Activated CD4-positive, alpha-beta T cell treated with anti-CD3 and anti-CD28 coated beads, Interleukin-2, amount 10 ng/mL, durations not matched to agents 24 days and 14 days (primary cell): ENCODE measurements at regions of chr20 and their contacts with region 1.

Region 1: GRCh38 chr20:63627129-63627750 is 339 bp upstream of the GMEB2 start:
- DNase-seq: peak; percentile 98
- H3K4me3 Mint-ChIP-seq: peak overlapping the region; percentile 97
- H3K27ac Mint-ChIP-seq: peak overlapping the region; percentile 99
- H3K4me1 Mint-ChIP-seq: peaks cover 20% of the 10 kb centered on the region
- H3K27me3 Mint-ChIP-seq: no peaks in the 10 kb centered on the region

Region 2: DNA sequence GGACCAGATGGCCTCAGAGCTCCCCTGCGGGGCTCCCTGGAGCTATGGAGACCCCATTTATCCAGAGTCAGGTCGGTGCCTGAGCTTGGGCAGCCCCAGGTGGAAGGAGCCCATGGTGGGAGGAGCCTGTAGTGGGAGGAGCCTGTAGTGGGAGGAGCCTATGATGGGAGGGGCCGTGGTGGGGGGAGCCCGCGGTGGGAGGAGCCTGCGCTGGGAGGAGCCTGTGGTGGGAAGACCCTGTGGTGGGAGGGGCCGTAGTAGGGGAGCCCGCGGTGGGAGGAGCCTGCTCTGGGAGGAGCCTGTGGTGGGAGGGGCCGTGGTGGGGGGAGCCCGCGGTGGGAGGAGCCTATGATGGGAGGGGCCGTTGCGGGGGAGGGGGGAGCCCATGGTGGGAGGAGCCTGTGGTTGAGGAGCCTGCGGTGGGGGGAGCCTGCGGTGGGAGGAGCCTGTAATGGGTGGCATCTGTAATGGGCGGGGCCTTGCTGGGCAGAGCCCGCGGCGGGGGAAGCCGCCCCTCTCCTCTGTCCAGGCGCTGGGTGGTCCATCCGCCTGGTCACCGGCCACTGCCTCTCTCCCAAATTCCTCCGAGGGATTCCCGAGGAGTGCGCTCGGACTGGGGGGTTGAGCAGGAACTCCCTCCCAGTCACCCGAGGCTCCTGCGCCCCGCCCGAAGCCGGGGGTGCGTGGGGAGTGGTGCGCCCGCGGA is 73.9 kb before region 1 on chr20:
- intact Hi-C with region 1: loop called (anchors 1 kb)
- DNase-seq: peak; percentile 97
- H3K4me3 Mint-ChIP-seq: peak overlapping the region; percentile 77
- H3K27ac Mint-ChIP-seq: peak overlapping the region; percentile 76
- H3K4me1 Mint-ChIP-seq: peaks cover 12% of the 10 kb centered on the region
- H3K27me3 Mint-ChIP-seq: peaks cover 15% of the 10 kb centered on the region

Region 3: GRCh38 chr20:63574156-63574828 is 52.9 kb before region 1 on chr20 and contains the start of gene HELZ2:
- intact Hi-C with region 1: loop called (anchors 5 kb)
- DNase-seq: peak; percentile 91
- H3K4me3 Mint-ChIP-seq: peak within 1 kb of the TSS; percentile 86
- H3K27ac Mint-ChIP-seq: peak within 1 kb of the TSS; percentile 80
- H3K4me1 Mint-ChIP-seq: peaks cover 4% of the 10 kb centered on the region
- H3K27me3 Mint-ChIP-seq: peaks cover 10% of the 10 kb centered on the region
- total RNA-seq, gene HELZ2: 13.7 and 15.9 TPM in 2 replicates

Region 4: GRCh38 chr20:63657937-63658748 is 30.9 kb after region 1 on chr20 and contains the start of gene RTEL1:
- intact Hi-C with region 1: loop called (anchors 1 kb)
- DNase-seq: peak; percentile 98
- H3K4me3 Mint-ChIP-seq: peak within 1 kb of the TSS; percentile 93
- H3K27ac Mint-ChIP-seq: peak within 1 kb of the TSS; percentile 89
- H3K4me1 Mint-ChIP-seq: peaks cover 34% of the 10 kb centered on the region
- H3K27me3 Mint-ChIP-seq: peaks cover 2% of the 10 kb centered on the region
- total RNA-seq, gene RTEL1: 60.7 and 64.7 TPM in 2 replicates

Region 5: GRCh38 chr20:63822276-63822696 is 195.0 kb after region 1 on chr20:
- intact Hi-C with region 1: no loop called
- DNase-seq: no peak
- H3K4me3 Mint-ChIP-seq: no peak overlapping the region
- H3K27ac Mint-ChIP-seq: no peak overlapping the region
- H3K4me1 Mint-ChIP-seq: peaks cover 4% of the 10 kb centered on the region
- H3K27me3 Mint-ChIP-seq: peaks cover 19% of the 10 kb centered on the region